Mammary epithelial cell (primary cell): ENCODE measurements at regions of chr17 and their contacts with region 1.

Region 1: GRCh38 chr17:43356999-43357398 is 41.8 kb upstream of the ARL4D start:
- DNase-seq: peak; percentile 96
- H3K4me3 ChIP-seq: no peak overlapping the region
- H3K27ac ChIP-seq: peak overlapping the region; percentile 12
- H3K4me1 ChIP-seq: peaks cover 27% of the 10 kb centered on the region
- H3K27me3 ChIP-seq: no peaks in the 10 kb centered on the region
- CTCF ChIP-seq: no peak

Region 2: GRCh38 chr17:43338886-43339516 is 18.0 kb before region 1 on chr17:
- CTCF ChIA-PET with region 1: no interaction called
- dilution Hi-C with region 1: no loop called
- in situ Hi-C with region 1: no loop called
- intact Hi-C with region 1: loop called (anchors 1 kb)
- DNase-seq: peak; percentile 23
- H3K4me3 ChIP-seq: no peak overlapping the region
- H3K27ac ChIP-seq: no peak overlapping the region
- H3K4me1 ChIP-seq: no peaks in the 10 kb centered on the region
- H3K27me3 ChIP-seq: no peaks in the 10 kb centered on the region
- CTCF ChIP-seq: peak; percentile 37 to 81

Region 3: DNA sequence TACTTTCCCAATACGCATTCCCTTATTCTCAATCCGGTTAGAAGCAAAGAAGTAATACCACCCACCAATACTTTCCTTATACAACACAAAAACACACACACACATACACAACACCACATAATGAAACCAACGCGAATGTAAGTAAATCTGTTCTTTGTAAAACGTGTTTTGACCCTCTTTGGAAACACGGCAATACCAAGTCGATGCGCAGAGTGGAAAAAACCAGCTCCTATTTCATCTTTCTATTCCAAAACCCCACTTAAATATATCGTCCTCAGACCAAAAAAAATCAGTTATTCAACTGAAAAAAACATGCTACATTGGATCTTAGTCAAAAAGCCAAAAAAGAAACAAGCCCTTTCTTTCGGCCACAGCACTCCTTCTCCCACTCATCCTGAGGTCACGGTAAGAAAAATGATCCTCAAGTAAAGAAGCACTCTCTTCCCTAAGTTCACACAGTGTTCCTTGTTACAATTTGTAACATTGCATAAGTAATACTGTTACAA is 10.8 kb after region 1 on chr17:
- CTCF ChIA-PET with region 1: no interaction called
- dilution Hi-C with region 1: no loop called
- in situ Hi-C with region 1: no loop called
- intact Hi-C with region 1: loop called (anchors 1 kb)
- DNase-seq: peak; percentile 99
- H3K4me3 ChIP-seq: no peak overlapping the region
- H3K27ac ChIP-seq: peak overlapping the region; percentile 99
- H3K4me1 ChIP-seq: peaks cover 21% of the 10 kb centered on the region
- H3K27me3 ChIP-seq: no peaks in the 10 kb centered on the region
- CTCF ChIP-seq: no peak